GM12878 (cell line): ENCODE measurements at regions of chr12 and their contacts with region 1.

Region 1: GRCh38 chr12:24414480-24414879 is 465.0 kb upstream of the SOX5 start:
- DNase-seq: no peak
- ATAC-seq: no peak
- H3K4me3 ChIP-seq: no peak overlapping the region
- H3K27ac ChIP-seq: no peak overlapping the region
- H3K4me1 ChIP-seq: no peaks in the 10 kb centered on the region
- H3K27me3 ChIP-seq: 0 out of 4 replicates have a peak, but pooled peaks cover 0 to 2% of the 10 kb centered on the region in 2 experiments
- CTCF ChIP-seq: no peak
- EP300 ChIP-seq: no peak
- POLR2A ChIP-seq: no peak
- RAD21 ChIP-seq: no peak

Region 2: DNA sequence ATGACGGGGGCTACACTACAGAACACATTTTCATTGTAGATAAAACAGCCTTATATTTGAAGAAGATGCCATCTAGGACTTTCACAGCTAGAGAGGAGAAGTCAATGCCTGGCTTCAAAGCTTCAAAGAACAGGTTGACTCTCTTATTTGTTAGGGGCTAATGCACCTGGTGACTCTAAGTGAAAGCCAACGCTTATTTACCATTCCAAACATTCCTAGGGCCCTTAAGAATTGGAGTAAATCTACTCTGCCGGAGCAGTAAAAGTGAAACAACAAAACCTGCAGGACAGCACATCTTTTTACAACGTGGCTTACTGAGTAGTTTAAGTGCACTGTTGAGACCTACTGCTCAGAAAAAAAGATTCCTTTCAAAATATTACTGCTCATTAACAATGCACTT is 22.2 kb after region 1 on chr12:
- CTCF ChIA-PET with region 1: no interaction called
- POLR2A ChIA-PET with region 1: no interaction called
- RAD21 ChIA-PET with region 1: no interaction called
- SMC1A ChIA-PET with region 1: no interaction called
- in situ Hi-C with region 1: no loop called
- intact Hi-C with region 1: loop called (anchors 1 kb)
- DNase-seq: no peak
- ATAC-seq: no peak
- H3K4me3 ChIP-seq: no peak overlapping the region
- H3K27ac ChIP-seq: no peak overlapping the region
- H3K4me1 ChIP-seq: no peaks in the 10 kb centered on the region
- H3K27me3 ChIP-seq: no peaks in the 10 kb centered on the region
- CTCF ChIP-seq: no peak
- EP300 ChIP-seq: no peak
- POLR2A ChIP-seq: no peak
- RAD21 ChIP-seq: no peak